PC-9 (cell line): ENCODE measurements at regions of chr18 and their contacts with region 1.

Region 1: GRCh38 chr18:63476666-63477065 is at the start of gene SERPINB5:
- DNase-seq: peak; percentile 83 to 89
- H3K4me3 ChIP-seq: peak within 1 kb of the TSS; percentile 67
- H3K27ac ChIP-seq: peak within 1 kb of the TSS; percentile 78
- H3K4me1 ChIP-seq: peaks cover 54% of the 10 kb centered on the region
- H3K27me3 ChIP-seq: no peaks in the 10 kb centered on the region
- CTCF ChIP-seq: no peak
- total RNA-seq, gene SERPINB5: 25.5 and 26.2 TPM in 2 replicates

Region 2: GRCh38 chr18:62506495-62507143 is 970.0 kb before region 1 on chr18:
- CTCF ChIA-PET with region 1: no interaction called
- POLR2A ChIA-PET with region 1: interaction called, 17 read pairs
- intact Hi-C with region 1: no loop called
- DNase-seq: no peak
- H3K4me3 ChIP-seq: peak overlapping the region; percentile 45
- H3K27ac ChIP-seq: peak overlapping the region; percentile 17; the same call in 1 of the 2 replicates
- H3K4me1 ChIP-seq: peaks cover 25% of the 10 kb centered on the region
- H3K27me3 ChIP-seq: no peaks in the 10 kb centered on the region
- CTCF ChIP-seq: no peak

Region 3: GRCh38 chr18:63444567-63444966 is 32.1 kb before region 1 on chr18:
- CTCF ChIA-PET with region 1: no interaction called
- POLR2A ChIA-PET with region 1: no interaction called
- intact Hi-C with region 1: loop called (anchors 5 kb)
- DNase-seq: peak in 1 of 2 experiments; percentile 79
- H3K4me3 ChIP-seq: no peak overlapping the region
- H3K27ac ChIP-seq: peak overlapping the region; percentile 74
- H3K4me1 ChIP-seq: peaks cover 21% of the 10 kb centered on the region
- H3K27me3 ChIP-seq: no peaks in the 10 kb centered on the region
- CTCF ChIP-seq: no peak

Region 4: GRCh38 chr18:63454497-63454896 is 22.2 kb before region 1 on chr18:
- CTCF ChIA-PET with region 1: no interaction called
- POLR2A ChIA-PET with region 1: no interaction called
- intact Hi-C with region 1: loop called (anchors 2 kb)
- DNase-seq: peak; percentile 76 to 93
- H3K4me3 ChIP-seq: peak overlapping the region; percentile 15; the same call in 1 of the 2 replicates
- H3K27ac ChIP-seq: peak overlapping the region; percentile 86
- H3K4me1 ChIP-seq: peaks cover 52% of the 10 kb centered on the region
- H3K27me3 ChIP-seq: no peaks in the 10 kb centered on the region
- CTCF ChIP-seq: no peak

Region 5: DNA sequence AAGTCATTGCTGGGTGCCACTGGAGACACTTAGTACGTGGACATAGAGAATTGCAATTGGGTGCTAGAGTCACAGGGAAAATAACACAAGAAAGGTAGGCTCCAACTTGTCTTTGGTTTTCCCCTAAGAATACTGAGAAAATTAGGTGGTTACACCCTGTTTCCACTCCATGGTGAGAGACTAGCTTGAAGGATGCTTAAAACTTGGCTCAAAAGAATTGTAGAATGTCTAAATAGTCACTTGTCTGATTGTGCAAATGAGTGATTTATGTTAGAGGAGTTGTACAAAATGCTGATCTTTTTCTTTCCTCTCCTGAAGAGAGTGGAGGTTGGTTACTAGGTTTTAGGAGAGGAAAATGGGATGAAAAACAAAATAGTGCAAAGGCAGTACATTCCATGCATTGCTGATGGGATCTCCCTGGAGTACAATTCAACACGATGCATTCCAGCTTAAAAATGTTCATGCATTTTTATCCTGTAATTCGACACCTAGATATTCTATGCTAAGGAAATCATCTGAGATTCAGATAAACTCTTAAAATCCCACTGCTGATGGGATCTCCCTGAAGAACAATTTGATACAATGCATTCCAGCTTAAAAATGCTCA is 63.3 kb after region 1 on chr18:
- CTCF ChIA-PET with region 1: no interaction called
- POLR2A ChIA-PET with region 1: interaction called, 18 read pairs
- intact Hi-C with region 1: no loop called
- DNase-seq: peak in 1 of 2 experiments; percentile 40
- H3K4me3 ChIP-seq: no peak overlapping the region
- H3K27ac ChIP-seq: no peak overlapping the region
- H3K4me1 ChIP-seq: peaks cover 8% of the 10 kb centered on the region; the same call in 1 of the 2 replicates
- H3K27me3 ChIP-seq: no peaks in the 10 kb centered on the region
- CTCF ChIP-seq: no peak